Mucosa of descending colon (tissue), 3 donors: ENCODE measurements at regions of chr19 and their contacts with region 1.

Region 1: DNA sequence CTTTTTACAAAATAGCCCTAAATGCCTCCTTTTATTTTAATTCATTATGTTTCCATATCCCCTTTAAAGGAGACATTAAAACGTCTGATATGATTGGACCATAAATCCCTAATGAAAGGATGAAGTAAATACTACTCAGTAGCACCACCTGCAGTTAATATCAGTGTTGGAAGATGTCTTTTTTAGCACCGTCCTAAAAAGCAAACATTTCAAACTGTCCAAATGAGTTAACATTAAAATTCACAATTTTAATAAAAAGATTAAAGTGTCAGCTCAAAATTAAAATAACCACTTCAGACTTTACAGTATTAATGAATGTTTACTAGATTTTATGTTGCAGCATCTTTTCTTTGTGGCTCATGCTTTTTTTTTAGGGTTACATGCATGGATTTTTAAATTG is 12.3 kb downstream of the ZNF507 start:
- DNase-seq: no peak
- ATAC-seq: no peak
- H3K4me3 ChIP-seq: no peak overlapping the region
- H3K4me1 ChIP-seq: peaks cover 7% of the 10 kb centered on the region
- CTCF ChIP-seq: no peak

Region 2: DNA sequence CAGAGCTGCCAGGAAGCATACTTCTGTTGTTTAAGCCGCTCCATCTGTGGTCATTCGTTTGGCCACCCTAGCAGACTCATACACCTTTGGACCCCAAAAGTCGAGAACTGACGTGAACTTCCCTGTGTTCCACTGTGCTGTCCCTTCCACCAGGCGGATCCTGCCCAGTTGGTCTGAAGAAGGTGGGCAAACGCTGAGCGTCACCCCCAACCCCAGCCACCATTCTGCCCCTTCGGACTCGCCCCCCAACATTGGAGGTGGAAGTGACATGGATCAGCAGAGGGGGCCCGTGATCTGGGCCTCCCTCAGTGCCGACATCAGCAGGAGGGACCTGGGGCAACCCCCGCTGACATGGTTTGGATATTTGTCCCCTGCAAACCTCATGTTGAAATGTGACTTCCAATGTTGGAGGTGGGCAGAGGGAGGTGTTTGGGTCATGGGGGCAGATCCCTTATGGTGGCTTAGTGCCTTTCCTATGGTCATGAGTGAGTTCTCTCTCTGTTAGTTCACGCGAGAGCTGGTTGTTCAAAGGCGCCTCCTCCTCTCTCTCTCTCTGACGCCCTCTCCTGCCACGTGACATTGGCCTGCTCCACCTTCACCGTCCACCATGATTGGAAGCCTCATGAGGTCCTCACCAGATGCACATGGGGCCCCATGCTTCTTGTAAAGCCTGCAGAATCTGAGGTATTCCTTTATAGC is 105.9 kb before region 1 on chr19:
- intact Hi-C with region 1: no loop called
- DNase-seq: no peak
- ATAC-seq: no peak
- H3K4me3 ChIP-seq: no peak overlapping the region
- H3K4me1 ChIP-seq: no peaks in the 10 kb centered on the region
- CTCF ChIP-seq: no peak

Region 3: GRCh38 chr19:32405431-32406161 is 47.9 kb after region 1 on chr19 and contains the start of gene DPY19L3:
- intact Hi-C with region 1: loop called in 1 of 2 experiments (anchors 10 kb)
- DNase-seq: peak; percentile 97
- ATAC-seq: peak; percentile 99
- H3K4me3 ChIP-seq: peak within 1 kb of the TSS; percentile 90
- H3K4me1 ChIP-seq: peaks cover 13% of the 10 kb centered on the region
- CTCF ChIP-seq: no peak
- total RNA-seq, gene DPY19L3: 20.0 to 24.0 (median 21.5) TPM